Heart right ventricle (tissue), 16 donors: ENCODE measurements at regions of chr16 and their contacts with region 1.

Region 1: DNA sequence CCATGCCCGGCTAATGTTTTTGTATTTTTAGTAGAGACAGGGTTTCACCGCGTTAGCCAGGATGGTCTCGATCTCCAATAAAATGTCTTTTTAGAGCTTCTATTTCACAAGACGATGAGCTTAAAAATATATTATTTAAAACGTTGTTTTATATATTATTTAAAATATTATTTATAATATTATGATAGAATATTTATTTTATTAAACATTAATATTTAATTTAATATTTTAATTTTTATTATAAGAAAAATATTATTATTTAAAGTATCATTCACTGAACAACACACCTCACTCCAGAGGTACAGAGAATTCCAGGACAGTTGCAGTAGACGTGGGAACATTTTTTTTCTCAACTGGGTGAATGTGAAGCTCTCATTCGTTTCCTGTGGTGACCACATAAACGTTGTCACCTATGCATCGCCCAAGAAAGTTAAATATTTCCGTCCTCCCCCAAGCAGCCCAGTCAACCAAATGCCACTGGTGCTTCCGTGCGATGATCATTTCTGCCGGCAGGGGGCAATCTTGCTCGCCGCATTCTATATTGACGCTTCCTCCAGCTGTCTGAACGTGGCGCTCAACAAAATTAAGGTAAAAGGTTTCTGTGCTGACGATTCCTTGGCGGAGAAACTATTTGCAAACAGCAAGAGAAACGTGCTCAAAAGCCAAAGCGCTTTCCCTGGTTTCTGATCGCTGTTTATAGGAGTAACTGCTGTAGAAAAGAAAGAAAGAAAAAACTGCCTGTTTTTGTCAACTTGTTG is 41.7 kb upstream of the PRSS54 start:
- DNase-seq: peak; percentile 85 to 87
- ATAC-seq: peak; percentile 60 to 84 (median 76)
- H3K4me3 ChIP-seq: peak overlapping the region in 8 of 10 donors; percentile 14 to 50 (median 32)
- H3K27ac ChIP-seq: peak overlapping the region in 8 of 10 donors; percentile 10 to 82 (median 70)
- H3K4me1 ChIP-seq: peaks cover 5 to 44% (median 29%) of the 10 kb centered on the region in 9 donors
- H3K27me3 ChIP-seq: no peaks in the 10 kb centered on the region
- CTCF ChIP-seq: peak; percentile 89 to 96 (median 94)

Region 2: DNA sequence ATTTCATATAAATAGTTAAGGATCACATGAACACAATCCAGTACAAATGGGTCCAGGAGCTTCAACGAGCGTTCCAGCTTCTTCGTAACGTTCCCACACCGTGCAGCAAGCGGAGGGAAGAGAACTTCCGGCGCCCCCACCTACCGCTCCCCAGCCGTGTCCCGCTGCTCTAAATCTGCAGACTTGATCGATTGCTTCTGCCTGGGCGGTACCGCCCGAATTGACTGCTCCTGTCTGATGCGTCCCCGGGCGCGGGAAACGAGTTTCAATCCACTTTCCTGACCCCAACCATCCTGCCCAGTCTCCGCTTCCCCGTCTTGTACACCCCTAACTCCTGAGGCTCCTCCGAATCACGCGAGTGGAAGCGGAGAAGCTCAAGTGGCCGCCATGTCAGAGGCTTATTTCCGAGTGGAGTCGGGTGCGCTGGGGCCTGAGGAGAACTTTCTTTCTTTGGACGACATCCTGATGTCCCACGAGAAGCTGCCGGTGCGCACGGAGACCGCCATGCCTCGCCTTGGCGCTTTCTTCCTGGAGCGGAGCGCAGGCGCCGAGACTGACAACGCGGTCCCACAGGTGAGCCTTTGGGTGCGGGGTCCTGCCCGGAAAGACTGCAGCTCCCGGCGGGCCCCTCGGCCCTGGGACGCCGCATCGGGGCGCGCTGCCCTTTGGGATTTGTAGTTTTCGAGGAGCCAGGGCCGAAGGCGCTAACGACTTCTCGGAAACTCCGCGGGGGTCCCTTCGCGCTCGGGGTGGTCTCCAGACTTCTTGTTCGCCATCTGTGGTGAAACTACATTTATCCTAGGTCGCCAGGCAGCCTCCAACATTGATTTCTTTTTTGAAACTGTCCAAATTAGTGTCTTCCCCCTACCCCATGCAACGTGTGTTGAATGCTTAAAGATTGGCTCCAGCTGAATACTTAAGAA is 56.0 kb after region 1 on chr16 and contains the start of gene GINS3:
- intact Hi-C with region 1: loop called in 2 of 10 experiments (anchors 5 to 10 kb)
- DNase-seq: peak; percentile 85 to 95
- ATAC-seq: peak; percentile 97 to 99 (median 98)
- H3K4me3 ChIP-seq: peak within 1 kb of the TSS; percentile 61 to 100 (median 78)
- H3K27ac ChIP-seq: peak within 1 kb of the TSS; percentile 44 to 89 (median 84)
- H3K4me1 ChIP-seq: peaks cover 0 to 20% (median 12%) of the 10 kb centered on the region in 9 donors
- H3K27me3 ChIP-seq: peaks cover 0 to 4% (median 0%) of the 10 kb centered on the region in 7 donors
- CTCF ChIP-seq: peak in 2 of 9 donors; percentile 7 to 10
- total RNA-seq, gene GINS3: 4.0 to 8.8 (median 5.5) TPM

Region 3: GRCh38 chr16:58487566-58488351 is 151.2 kb after region 1 on chr16:
- intact Hi-C with region 1: loop called (anchors 1 to 5 kb)
- DNase-seq: peak; percentile 89 to 91
- ATAC-seq: peak; percentile 75 to 88 (median 84)
- H3K4me3 ChIP-seq: peak overlapping the region in 6 of 10 donors; percentile 20 to 33 (median 24)
- H3K27ac ChIP-seq: peak overlapping the region in 9 of 10 donors; percentile 29 to 79 (median 73)
- H3K4me1 ChIP-seq: peaks cover 5 to 63% (median 42%) of the 10 kb centered on the region in 9 donors
- H3K27me3 ChIP-seq: no peaks in the 10 kb centered on the region
- CTCF ChIP-seq: peak; percentile 91 to 99 (median 95)

Region 4: GRCh38 chr16:58644805-58645484 is 308.4 kb after region 1 on chr16:
- intact Hi-C with region 1: loop called in 1 of 10 experiments (anchors 10 kb)
- DNase-seq: no peak
- ATAC-seq: no peak
- H3K4me3 ChIP-seq: no peak overlapping the region
- H3K27ac ChIP-seq: no peak overlapping the region
- H3K4me1 ChIP-seq: no peaks in the 10 kb centered on the region
- H3K27me3 ChIP-seq: no peaks in the 10 kb centered on the region
- CTCF ChIP-seq: no peak

Region 5: DNA sequence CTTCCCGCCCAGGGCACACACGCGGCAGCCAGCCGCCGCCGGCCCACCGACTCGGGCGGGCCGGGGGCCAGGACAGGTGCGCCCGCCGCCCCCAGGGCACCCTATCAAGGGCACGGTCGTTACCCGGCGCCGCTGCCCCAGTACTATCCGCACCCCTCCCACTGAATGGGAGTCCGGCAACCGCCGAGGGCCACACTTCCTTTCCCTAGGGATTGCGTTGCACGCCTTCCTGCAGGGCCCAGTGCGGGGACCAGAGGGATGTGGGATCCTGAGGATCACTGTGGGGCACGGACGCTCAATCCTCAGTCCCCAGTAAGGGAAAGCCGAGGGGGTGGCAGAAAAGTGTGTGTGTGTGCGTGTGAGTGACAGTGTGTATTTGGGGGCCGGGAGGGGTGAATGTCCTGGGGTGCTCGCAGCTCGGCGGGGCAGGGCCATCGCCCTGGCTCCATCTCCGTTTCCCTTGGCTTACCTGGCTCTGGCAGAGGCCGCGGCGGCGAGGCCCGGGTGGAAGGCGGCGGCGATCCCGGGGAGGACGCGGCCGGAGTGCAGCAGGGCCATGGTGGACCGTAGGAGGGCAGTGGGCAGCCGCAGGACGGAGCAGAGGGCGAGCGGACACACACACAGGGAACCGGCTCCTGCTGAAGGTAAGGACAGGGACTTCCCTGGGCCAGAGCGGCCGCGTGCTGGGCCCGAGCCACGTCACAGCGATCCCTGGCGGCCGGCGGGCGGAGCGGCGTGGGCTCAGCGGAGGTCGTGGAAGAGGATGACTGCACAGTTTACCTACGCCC is 397.4 kb after region 1 on chr16 and contains the start of gene GOT2:
- intact Hi-C with region 1: loop called in 1 of 10 experiments (anchors 10 kb)
- DNase-seq: peak; percentile 77 to 85
- ATAC-seq: peak; percentile 94 to 98 (median 97)
- H3K4me3 ChIP-seq: peak within 1 kb of the TSS; percentile 74 to 99 (median 92)
- H3K27ac ChIP-seq: peak within 1 kb of the TSS; percentile 74 to 94 (median 89)
- H3K4me1 ChIP-seq: peaks cover 0 to 55% (median 33%) of the 10 kb centered on the region in 9 donors
- H3K27me3 ChIP-seq: no peaks in the 10 kb centered on the region
- CTCF ChIP-seq: peak; percentile 75 to 98 (median 91)
- total RNA-seq, gene GOT2: 379 to 658 (median 556) TPM